ENCODE measurements at regions of chr7 and their contacts with region 1.

Region 1: DNA sequence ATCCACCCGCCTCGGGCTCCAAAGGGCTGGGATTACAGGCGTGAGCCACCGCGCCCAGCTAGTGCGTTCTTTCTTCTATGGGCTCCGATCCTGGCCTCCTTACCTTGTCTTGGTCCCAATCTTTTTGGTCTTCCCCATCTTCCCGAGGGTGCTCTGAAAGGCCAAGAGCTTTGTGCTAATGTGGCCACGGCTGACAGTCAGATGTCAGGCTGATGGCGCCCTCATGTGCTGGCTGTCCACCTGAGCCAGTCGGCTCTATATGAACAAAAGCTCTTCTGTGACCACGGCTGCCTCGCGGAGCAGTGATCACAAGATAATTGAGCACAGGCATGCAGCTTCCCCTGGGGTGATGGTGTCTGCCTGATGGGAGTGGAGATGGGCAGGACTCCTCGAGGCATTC is 11.0 kb upstream of the AHCYL2 start:
- DNase-seq: peak in 1 of 2 donors; percentile 32
- H3K4me3 ChIP-seq: no peak overlapping the region
- H3K27ac ChIP-seq: no peak overlapping the region
- H3K4me1 ChIP-seq: no peaks in the 10 kb centered on the region
- H3K27me3 ChIP-seq: no peaks in the 10 kb centered on the region
- CTCF ChIP-seq: no peak
- POLR2A ChIP-seq: no peak

Region 2: DNA sequence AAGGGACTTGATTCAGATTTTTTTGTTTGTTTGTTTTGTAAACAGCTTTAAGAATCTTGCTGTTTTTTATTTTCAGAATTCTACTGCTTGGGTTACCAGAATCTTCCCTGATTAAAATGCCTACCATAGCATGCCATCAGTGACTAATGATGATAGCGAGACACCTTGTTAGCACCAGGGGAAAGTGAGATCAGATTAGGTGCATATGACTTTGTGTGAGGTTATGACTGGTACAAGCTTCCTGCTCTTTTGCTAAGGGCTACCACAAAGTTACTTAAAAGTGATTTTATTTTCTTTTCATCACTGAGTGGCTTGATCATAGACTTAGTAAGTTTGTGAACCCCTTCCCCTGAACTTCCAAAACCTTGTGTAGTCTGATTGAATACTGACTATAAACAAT is 1468.4 kb before region 1 on chr7:
- intact Hi-C with region 1: no loop called
- DNase-seq: no peak
- H3K4me3 ChIP-seq: no peak overlapping the region
- H3K27ac ChIP-seq: no peak overlapping the region
- H3K4me1 ChIP-seq: no peaks in the 10 kb centered on the region
- H3K27me3 ChIP-seq: no peaks in the 10 kb centered on the region
- CTCF ChIP-seq: no peak
- POLR2A ChIP-seq: no peak

Region 3: DNA sequence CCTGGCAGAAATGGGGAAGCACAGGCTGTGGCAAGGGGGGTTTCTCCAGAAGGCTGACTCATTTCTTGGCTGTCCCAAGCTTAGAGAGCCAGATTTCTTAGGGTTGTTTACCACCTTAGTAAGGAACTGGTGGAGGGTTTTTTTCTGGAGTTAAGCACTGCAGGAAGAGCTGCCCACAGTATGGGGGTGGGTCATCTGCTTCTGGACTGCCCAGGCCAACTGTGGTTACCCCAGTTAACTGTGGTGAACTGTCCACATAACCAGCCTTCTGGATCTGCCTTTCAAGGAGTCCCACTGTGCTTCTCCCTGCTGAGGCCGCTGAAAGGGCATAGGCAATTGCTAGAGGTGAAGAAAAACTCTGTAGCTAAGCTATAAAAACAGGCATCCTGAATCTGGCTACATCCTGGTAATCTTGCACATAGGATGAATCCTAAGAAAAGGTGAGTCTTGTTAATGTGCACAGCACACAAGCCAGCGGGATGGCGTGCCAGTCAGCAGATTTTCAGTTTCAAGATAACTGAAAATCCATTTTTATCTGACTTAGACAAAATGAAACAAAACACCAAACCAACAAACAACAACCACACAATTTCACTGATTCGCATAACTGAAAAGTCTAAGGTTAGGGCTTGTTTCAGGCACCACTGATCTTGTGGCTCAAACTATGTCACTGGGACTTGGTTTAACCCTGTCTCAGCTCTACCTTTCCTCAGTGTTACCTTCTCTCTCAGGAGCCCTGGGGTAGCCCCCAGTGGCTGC is 90.9 kb before region 1 on chr7:
- intact Hi-C with region 1: no loop called
- DNase-seq: no peak
- H3K4me3 ChIP-seq: no peak overlapping the region
- H3K27ac ChIP-seq: no peak overlapping the region
- H3K4me1 ChIP-seq: no peaks in the 10 kb centered on the region
- H3K27me3 ChIP-seq: no peaks in the 10 kb centered on the region
- CTCF ChIP-seq: no peak
- POLR2A ChIP-seq: no peak

Region 4: GRCh38 chr7:129163875-129164544 is 49.8 kb before region 1 on chr7:
- intact Hi-C with region 1: loop called (anchors 1 kb)
- DNase-seq: no peak
- H3K4me3 ChIP-seq: no peak overlapping the region
- H3K27ac ChIP-seq: no peak overlapping the region
- H3K4me1 ChIP-seq: no peaks in the 10 kb centered on the region
- H3K27me3 ChIP-seq: no peaks in the 10 kb centered on the region
- CTCF ChIP-seq: peak in 2 of 3 donors; percentile 61 to 63
- POLR2A ChIP-seq: no peak

Region 5: GRCh38 chr7:129417071-129417470 is 203.2 kb after region 1 on chr7:
- intact Hi-C with region 1: no loop called
- DNase-seq: peak; percentile 43 to 63
- H3K4me3 ChIP-seq: no peak overlapping the region
- H3K27ac ChIP-seq: no peak overlapping the region
- H3K4me1 ChIP-seq: no peaks in the 10 kb centered on the region
- H3K27me3 ChIP-seq: no peaks in the 10 kb centered on the region
- CTCF ChIP-seq: no peak
- POLR2A ChIP-seq: no peak